Ascending aorta (tissue), 2 donors: ENCODE measurements at regions of chr17 and their contacts with region 1.

Region 1: GRCh38 chr17:30104575-30105339 is 11.9 kb upstream of the NSRP1 start:
- DNase-seq: peak; percentile 36 to 87
- H3K4me3 ChIP-seq: peak overlapping the region; percentile 54 to 65
- H3K27ac ChIP-seq: no peak overlapping the region
- H3K4me1 ChIP-seq: no peaks in the 10 kb centered on the region
- H3K27me3 ChIP-seq: no peaks in the 10 kb centered on the region
- CTCF ChIP-seq: peak; percentile 78 to 88 (median 84)

Region 2: GRCh38 chr17:29740017-29740416 is 364.7 kb before region 1 on chr17:
- intact Hi-C with region 1: no loop called
- DNase-seq: no peak
- H3K4me3 ChIP-seq: no peak overlapping the region
- H3K27ac ChIP-seq: no peak overlapping the region
- H3K4me1 ChIP-seq: no peaks in the 10 kb centered on the region
- H3K27me3 ChIP-seq: no peaks in the 10 kb centered on the region
- CTCF ChIP-seq: no peak

Region 3: GRCh38 chr17:30173649-30174048 is 68.9 kb after region 1 on chr17:
- intact Hi-C with region 1: no loop called
- DNase-seq: no peak
- H3K4me3 ChIP-seq: no peak overlapping the region
- H3K27ac ChIP-seq: no peak overlapping the region
- H3K4me1 ChIP-seq: no peaks in the 10 kb centered on the region
- H3K27me3 ChIP-seq: no peaks in the 10 kb centered on the region
- CTCF ChIP-seq: no peak

Region 4: GRCh38 chr17:30336369-30337171 is 231.8 kb after region 1 on chr17:
- intact Hi-C with region 1: loop called (anchors 2 kb)
- DNase-seq: no peak
- H3K4me3 ChIP-seq: no peak overlapping the region
- H3K27ac ChIP-seq: no peak overlapping the region
- H3K4me1 ChIP-seq: no peaks in the 10 kb centered on the region
- H3K27me3 ChIP-seq: no peaks in the 10 kb centered on the region
- CTCF ChIP-seq: peak in 2 of 3 experiments; percentile 20 to 59